AG04449 (cell line): ENCODE measurements at regions of chr18 and their contacts with region 1.

Region 1: DNA sequence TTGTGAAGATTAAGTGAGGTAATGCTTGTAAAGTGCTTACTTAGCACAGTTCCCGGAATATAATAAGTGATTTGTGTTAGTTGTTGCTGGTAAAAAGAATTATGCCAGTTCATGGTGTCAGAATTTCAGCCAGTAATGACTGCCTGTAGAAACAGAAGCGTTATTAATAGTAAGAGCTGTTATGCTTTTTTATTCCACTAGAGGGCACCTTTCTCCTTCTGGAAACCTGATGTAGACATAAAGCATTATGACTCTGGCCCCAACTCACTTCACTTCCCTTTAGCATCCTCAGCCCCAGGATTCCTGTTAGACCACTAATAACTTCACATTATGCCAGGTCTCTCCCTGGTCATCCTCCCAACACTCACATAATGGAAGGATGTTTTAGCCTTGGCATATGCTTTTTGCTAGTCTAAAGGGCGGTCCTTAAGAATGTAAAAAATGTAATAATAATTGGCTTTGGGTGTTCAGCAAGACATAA is 34.9 kb downstream of the C18orf54 start:
- DNase-seq: no peak
- H3K4me3 ChIP-seq: no peak overlapping the region
- CTCF ChIP-seq: peak; percentile 60

Region 2: GRCh38 chr18:54357660-54358494 is 34.7 kb before region 1 on chr18 and contains the starts of genes C18orf54 and STARD6:
- CTCF ChIA-PET with region 1: interaction called, 11 read pairs
- POLR2A ChIA-PET with region 1: no interaction called
- DNase-seq: no peak
- H3K4me3 ChIP-seq: peak within 1 kb of the TSS; percentile 82
- CTCF ChIP-seq: peak; percentile 56

Region 3: GRCh38 chr18:54405290-54405689 is 12.7 kb after region 1 on chr18:
- CTCF ChIA-PET with region 1: interaction called, 12 read pairs
- POLR2A ChIA-PET with region 1: no interaction called
- DNase-seq: no peak
- H3K4me3 ChIP-seq: no peak overlapping the region
- CTCF ChIP-seq: no peak

Region 4: DNA sequence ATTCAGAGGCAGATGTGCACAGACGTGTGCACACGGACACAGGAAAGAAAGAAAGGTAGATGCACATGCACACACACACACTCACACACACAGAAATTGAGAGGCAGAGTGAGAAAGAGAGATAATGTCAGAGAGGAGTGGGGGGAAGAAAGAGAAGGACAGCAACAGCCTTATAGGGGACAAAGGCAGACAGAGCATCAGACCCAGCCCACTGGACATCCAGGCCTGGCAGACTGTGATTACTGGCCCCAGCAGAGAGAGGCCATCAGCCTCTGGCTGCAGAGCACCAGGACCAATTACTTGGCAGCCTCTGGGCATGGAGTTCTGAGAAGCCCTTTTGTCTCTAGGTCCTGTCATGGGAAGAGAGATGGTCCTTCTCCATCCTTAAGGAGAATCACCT is 31.2 kb after region 1 on chr18:
- CTCF ChIA-PET with region 1: no interaction called
- POLR2A ChIA-PET with region 1: no interaction called
- DNase-seq: no peak
- H3K4me3 ChIP-seq: no peak overlapping the region
- CTCF ChIP-seq: no peak

Region 5: DNA sequence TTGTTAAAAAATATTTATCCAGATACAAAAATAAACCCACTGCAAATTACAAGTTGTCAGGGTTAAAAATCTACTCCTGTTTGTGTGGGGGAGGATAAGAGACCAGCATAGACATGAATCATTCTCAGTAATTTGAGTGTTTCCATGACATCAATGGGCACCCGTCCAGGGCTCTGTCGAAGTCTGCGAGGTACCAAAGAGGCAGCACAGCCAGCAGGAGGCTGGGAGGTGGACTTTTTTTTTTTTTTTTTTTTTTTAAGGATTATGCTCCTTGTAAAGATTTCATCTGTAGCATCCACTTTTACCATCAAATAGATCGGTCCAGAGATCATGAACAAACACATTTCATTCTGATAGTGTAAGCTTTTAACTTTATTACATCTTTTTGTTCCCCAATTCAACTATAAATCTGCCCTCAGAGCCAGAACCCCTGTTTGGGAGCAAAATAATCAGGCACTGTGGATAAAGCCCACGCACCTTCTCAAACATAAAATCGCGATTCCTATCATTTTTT is 1013.4 kb after region 1 on chr18:
- CTCF ChIA-PET with region 1: no interaction called
- POLR2A ChIA-PET with region 1: no interaction called
- DNase-seq: no peak
- H3K4me3 ChIP-seq: no peak overlapping the region
- CTCF ChIP-seq: no peak